Naive thymus-derived CD4-positive, alpha-beta T cell (primary cell): ENCODE measurements at regions of chr9 and their contacts with region 1.

Region 1: DNA sequence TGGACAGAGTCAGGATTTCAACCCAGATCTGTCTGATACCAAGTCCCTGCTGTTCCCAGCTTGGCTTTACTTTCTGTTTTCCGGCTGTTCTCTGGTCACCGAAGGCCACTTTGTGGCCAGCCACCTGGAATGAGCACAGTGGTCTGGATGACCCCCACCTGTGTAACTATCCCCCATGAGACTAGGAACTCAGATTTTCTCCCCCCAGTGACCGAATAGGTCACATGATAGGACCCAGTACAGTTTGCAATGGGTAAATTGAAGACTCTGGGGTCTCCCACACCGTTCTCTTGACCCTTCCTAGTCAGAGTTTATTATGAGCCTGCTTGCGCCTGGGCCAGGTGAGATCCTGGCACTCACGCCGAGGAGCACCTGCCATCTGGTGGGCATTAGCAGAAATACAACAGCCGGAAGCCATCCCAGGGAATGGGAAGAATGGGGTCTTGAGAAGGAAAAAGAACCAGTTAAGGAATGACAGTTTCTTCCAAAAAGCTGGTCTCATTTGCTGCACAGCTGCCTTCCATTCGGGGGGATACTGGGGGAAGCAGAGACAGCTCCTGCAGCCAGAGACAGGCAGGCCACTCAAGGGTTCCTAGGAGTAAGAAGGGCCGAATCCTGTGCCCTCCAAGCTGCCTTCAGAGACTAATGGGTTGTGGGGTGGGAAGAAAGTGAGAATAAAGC is 7.1 kb downstream of the PHYHD1 start:
- DNase-seq: peak; percentile 24 to 69 (median 46)
- ATAC-seq: peak; percentile 77
- H3K4me3 ChIP-seq: no peak overlapping the region
- H3K4me3 Mint-ChIP-seq: peak overlapping the region in 3 of 10 donors; percentile 11 to 47 (median 39)
- H3K27ac ChIP-seq: no peak overlapping the region
- H3K27ac Mint-ChIP-seq: peak overlapping the region in 8 of 9 donors; percentile 1 to 76 (median 50)
- H3K4me1 ChIP-seq: peaks cover 3 to 6% of the 10 kb centered on the region in 2 donors
- H3K4me1 Mint-ChIP-seq: peaks cover 12 to 22% (median 19%) of the 10 kb centered on the region in 7 donors
- H3K27me3 ChIP-seq: no peaks in the 10 kb centered on the region
- H3K27me3 Mint-ChIP-seq: peaks cover 0 to 3% (median 0%) of the 10 kb centered on the region in 5 donors

Region 2: GRCh38 chr9:128643519-128644300 is 284.2 kb before region 1 on chr9:
- CTCF ChIA-PET with region 1: interaction called, 9 read pairs
- POLR2A ChIA-PET with region 1: no interaction called
- intact Hi-C with region 1: loop called in 1 of 2 experiments (anchors 2 kb)
- DNase-seq: no peak
- ATAC-seq: no peak
- H3K4me3 ChIP-seq: no peak overlapping the region
- H3K4me3 Mint-ChIP-seq: no peak overlapping the region
- H3K27ac ChIP-seq: no peak overlapping the region
- H3K27ac Mint-ChIP-seq: peak overlapping the region in 1 of 9 donors; percentile 60
- H3K4me1 ChIP-seq: no peaks in the 10 kb centered on the region
- H3K4me1 Mint-ChIP-seq: peaks cover 0 to 3% (median 0%) of the 10 kb centered on the region in 7 donors
- H3K27me3 ChIP-seq: no peaks in the 10 kb centered on the region
- H3K27me3 Mint-ChIP-seq: no peaks in the 10 kb centered on the region